ENCODE measurements at regions of chr14 and their contacts with region 1.

Region 1: DNA sequence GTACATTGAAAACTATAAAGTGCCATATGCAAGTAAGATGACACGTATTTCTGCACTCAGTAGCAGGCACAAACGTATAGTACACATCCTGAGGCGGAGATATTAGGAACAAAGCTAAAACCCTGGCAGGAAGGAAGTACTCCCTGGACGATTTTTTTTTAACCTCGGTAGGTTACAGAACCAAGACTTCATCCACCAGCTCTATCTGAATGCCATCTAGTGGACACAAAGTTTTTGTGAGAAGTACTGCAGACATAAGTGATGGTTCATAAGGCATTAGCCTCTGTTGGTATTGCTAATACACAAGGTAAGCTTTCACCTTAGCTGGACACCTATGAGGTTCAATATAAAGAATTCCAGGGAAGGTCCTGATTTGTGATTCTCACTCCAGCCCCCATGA is 83.0 kb upstream of the CCDC196 start:
- DNase-seq: no peak
- H3K4me3 ChIP-seq: no peak overlapping the region
- H3K4me3 Mint-ChIP-seq: no peak overlapping the region
- H3K27ac ChIP-seq: no peak overlapping the region
- H3K27ac Mint-ChIP-seq: no peak overlapping the region
- H3K4me1 ChIP-seq: no peaks in the 10 kb centered on the region
- H3K4me1 Mint-ChIP-seq: peaks cover 3 to 5% (median 5%) of the 10 kb centered on the region in 3 donors
- H3K27me3 ChIP-seq: no peaks in the 10 kb centered on the region
- H3K27me3 Mint-ChIP-seq: no peaks in the 10 kb centered on the region

Region 2: GRCh38 chr14:66359500-66359899 is 43.7 kb before region 1 on chr14:
- CTCF ChIA-PET with region 1: interaction called, 11 read pairs
- POLR2A ChIA-PET with region 1: no interaction called
- DNase-seq: peak in 2 of 5 donors; percentile 24 to 43
- H3K4me3 ChIP-seq: no peak overlapping the region
- H3K4me3 Mint-ChIP-seq: no peak overlapping the region
- H3K27ac ChIP-seq: no peak overlapping the region
- H3K27ac Mint-ChIP-seq: no peak overlapping the region
- H3K4me1 ChIP-seq: no peaks in the 10 kb centered on the region
- H3K4me1 Mint-ChIP-seq: no peaks in the 10 kb centered on the region
- H3K27me3 ChIP-seq: no peaks in the 10 kb centered on the region
- H3K27me3 Mint-ChIP-seq: peaks cover 9 to 13% of the 10 kb centered on the region in 2 donors